ENCODE measurements at regions of chr1 and their contacts with region 1.

Region 1: GRCh38 chr1:170095976-170096748 is 21.7 kb upstream of the KIFAP3 start:
- DNase-seq: no peak
- H3K4me3 ChIP-seq: no peak overlapping the region
- H3K4me3 Mint-ChIP-seq: peak overlapping the region; percentile 45
- H3K27ac Mint-ChIP-seq: no peak overlapping the region
- H3K4me1 ChIP-seq: no peaks in the 10 kb centered on the region
- H3K4me1 Mint-ChIP-seq: no peaks in the 10 kb centered on the region
- H3K27me3 ChIP-seq: no peaks in the 10 kb centered on the region
- H3K27me3 Mint-ChIP-seq: peaks cover 9% of the 10 kb centered on the region
- CTCF ChIP-seq: no peak

Region 2: GRCh38 chr1:170074250-170075157 is 21.7 kb before region 1 on chr1 and contains the start of gene KIFAP3:
- CTCF ChIA-PET with region 1: no interaction called
- POLR2A ChIA-PET with region 1: no interaction called
- intact Hi-C with region 1: loop called (anchors 2 kb)
- DNase-seq: peak; percentile 96 to 98
- H3K4me3 ChIP-seq: peak within 1 kb of the TSS; percentile 53
- H3K4me3 Mint-ChIP-seq: peak within 1 kb of the TSS; percentile 88
- H3K27ac Mint-ChIP-seq: peak within 1 kb of the TSS; percentile 85
- H3K4me1 ChIP-seq: no peaks in the 10 kb centered on the region
- H3K4me1 Mint-ChIP-seq: peaks cover 16% of the 10 kb centered on the region
- H3K27me3 ChIP-seq: no peaks in the 10 kb centered on the region
- H3K27me3 Mint-ChIP-seq: no peaks in the 10 kb centered on the region
- CTCF ChIP-seq: peak in 1 of 2 experiments; percentile 70
- total RNA-seq, gene KIFAP3: 10.9 and 11.0 TPM in 2 replicates

Measured in Caco-2 (cell line).